Activated T-helper 1 cell treated with anti-CD3 and anti-CD28 coated beads, Interleukin-12 subunit alpha, Interleukin-12 subunit beta, Interleukin-2, Interleukin-4 antibody, amounts not matched to agents 30 ng/mL and 10 ng/mL and 1 ng/mL, durations not matched to agents 14 hours and 24 hours and 36 hours (primary cell): ENCODE measurements at regions of chr2 and their contacts with region 1.

Region 1: DNA sequence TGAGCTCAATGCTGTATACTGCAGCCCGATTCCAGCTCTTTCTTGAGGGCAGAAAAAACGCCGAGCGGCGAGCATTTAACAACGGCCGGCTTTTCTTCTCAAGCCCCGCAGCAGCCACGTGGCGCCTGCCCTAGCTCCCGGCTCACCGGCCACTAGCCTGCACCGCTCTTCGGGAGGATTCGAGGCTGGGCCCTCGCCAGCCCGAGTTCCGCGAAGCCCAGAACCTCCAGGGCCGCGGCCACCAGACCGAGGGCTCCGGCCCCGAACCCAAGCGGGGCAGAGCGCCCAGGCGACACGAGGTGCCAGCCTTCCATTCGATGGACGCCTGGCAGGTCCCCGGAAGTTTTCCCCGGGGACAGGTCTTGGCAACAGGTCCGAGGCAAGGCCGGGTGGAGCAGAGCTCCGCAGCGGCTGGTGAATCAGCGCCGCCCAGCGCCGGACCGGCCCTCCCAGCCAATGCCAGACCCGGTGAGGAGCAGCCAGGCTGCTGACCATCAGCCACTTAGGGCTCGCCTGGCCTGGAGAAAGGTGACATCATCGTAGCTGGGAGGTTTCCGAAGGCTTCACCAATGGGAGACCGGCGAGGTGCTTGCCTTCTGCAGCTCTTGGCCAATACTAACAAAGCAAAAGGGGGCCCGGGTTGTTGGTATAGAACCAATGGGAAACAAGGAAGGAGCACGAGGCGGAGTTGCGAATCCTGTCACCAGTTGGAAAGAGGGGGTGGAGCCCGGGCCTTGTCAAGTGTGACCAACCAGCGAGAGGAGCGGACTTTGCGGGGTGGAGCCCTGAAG is 544 bp upstream of the MXD1 start:
- DNase-seq: peak; percentile 100
- H3K4me3 Mint-ChIP-seq: peak overlapping the region; percentile 78
- H3K27ac Mint-ChIP-seq: peak overlapping the region; percentile 90
- H3K4me1 Mint-ChIP-seq: peaks cover 42% of the 10 kb centered on the region
- H3K27me3 Mint-ChIP-seq: no peaks in the 10 kb centered on the region

Region 2: GRCh38 chr2:69893684-69894551 is 20.4 kb before region 1 on chr2 and contains the start of gene SNRNP27:
- intact Hi-C with region 1: loop called (anchors 1 kb)
- DNase-seq: peak; percentile 71
- H3K4me3 Mint-ChIP-seq: peak within 1 kb of the TSS; percentile 99
- H3K27ac Mint-ChIP-seq: peak within 1 kb of the TSS; percentile 93
- H3K4me1 Mint-ChIP-seq: peaks cover 36% of the 10 kb centered on the region
- H3K27me3 Mint-ChIP-seq: no peaks in the 10 kb centered on the region
- total RNA-seq, gene SNRNP27: 54.0 and 55.6 TPM in 2 replicates

Region 3: DNA sequence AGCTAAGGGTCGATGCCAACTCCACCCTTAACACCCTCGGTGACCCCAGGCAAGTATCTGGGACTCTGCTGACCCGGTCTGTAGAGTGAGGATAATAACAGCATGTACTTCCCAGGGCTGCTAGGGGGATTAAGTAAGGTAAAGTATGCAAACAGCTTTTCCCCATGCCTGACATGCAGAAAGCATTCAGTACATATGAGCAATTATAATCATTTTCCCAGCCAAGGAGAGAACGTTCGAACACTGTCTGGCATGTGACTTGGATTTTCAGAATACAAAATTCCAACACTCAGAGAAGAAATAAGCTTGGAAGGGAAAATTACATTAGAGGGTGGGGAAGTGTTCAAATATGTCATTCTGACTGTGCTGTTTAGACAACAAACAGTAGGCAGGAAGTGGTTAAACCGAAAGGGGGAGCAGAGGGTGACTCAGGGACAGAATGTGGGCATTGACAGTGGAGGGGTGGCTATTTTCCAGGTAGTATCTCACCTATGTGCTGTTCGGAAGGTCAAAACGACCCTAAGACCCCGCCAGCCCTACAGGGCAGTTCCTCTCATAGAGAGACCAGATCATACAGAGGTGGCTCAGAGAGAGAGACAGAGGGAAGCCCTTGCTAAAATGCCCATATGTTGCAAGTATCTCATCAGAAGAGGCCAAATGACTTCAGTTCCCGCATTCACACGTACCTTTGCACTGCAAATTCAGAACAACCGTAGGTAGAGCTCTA is 32.1 kb after region 1 on chr2:
- intact Hi-C with region 1: loop called (anchors 1 kb)
- DNase-seq: peak; percentile 66
- H3K4me3 Mint-ChIP-seq: peak overlapping the region; percentile 67
- H3K27ac Mint-ChIP-seq: peak overlapping the region; percentile 86
- H3K4me1 Mint-ChIP-seq: peaks cover 52% of the 10 kb centered on the region
- H3K27me3 Mint-ChIP-seq: peaks cover 5% of the 10 kb centered on the region

Region 4: DNA sequence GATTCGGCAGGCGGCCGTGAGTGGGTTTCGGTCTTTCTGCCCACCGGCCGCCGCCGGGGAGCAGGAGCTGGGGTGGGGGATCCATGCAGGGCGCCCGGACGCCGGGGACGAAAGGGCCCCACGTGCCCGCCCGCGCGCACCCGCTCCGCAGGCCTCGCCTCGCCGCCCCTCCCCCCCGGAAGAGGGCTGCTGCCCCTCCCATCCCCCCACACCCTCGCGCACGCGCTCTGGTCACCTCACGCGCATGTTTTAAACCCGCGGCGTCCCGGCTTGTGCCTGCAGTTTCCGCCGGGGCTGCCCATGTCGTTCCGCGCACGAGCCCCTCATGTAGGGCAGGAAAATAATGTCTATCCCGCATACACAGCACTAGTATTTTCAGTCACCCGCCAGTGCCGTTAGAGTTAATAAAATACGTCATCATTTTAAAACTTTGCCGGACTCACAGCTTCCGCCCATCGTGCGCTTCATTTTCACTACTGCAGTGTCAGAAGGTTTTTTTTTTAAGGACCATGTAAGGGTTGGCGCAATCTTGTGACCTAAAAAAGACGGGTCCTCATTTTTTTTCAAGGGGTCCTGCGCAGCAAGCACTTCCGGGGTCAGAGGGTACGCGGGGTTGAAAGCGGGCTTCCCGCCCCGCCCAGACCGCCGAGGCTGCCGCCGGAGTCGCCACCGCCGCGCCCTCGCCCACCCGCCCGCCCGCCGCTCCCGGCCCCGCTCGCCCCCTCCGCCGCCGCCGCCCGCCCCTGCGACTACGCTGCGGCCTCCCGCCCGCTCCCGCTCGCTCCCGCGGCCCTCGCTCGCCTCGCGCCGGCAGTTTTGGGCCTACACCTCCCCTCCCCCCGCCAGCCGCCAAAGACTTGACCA is 172.7 kb after region 1 on chr2 and contains the start of gene PCBP1:
- intact Hi-C with region 1: loop called (anchors 1 kb)
- DNase-seq: peak; percentile 91
- H3K4me3 Mint-ChIP-seq: peak within 1 kb of the TSS; percentile 99
- H3K27ac Mint-ChIP-seq: peak within 1 kb of the TSS; percentile 100
- H3K4me1 Mint-ChIP-seq: peaks cover 56% of the 10 kb centered on the region
- H3K27me3 Mint-ChIP-seq: no peaks in the 10 kb centered on the region
- total RNA-seq, gene PCBP1: 426 and 427 TPM in 2 replicates

Region 5: DNA sequence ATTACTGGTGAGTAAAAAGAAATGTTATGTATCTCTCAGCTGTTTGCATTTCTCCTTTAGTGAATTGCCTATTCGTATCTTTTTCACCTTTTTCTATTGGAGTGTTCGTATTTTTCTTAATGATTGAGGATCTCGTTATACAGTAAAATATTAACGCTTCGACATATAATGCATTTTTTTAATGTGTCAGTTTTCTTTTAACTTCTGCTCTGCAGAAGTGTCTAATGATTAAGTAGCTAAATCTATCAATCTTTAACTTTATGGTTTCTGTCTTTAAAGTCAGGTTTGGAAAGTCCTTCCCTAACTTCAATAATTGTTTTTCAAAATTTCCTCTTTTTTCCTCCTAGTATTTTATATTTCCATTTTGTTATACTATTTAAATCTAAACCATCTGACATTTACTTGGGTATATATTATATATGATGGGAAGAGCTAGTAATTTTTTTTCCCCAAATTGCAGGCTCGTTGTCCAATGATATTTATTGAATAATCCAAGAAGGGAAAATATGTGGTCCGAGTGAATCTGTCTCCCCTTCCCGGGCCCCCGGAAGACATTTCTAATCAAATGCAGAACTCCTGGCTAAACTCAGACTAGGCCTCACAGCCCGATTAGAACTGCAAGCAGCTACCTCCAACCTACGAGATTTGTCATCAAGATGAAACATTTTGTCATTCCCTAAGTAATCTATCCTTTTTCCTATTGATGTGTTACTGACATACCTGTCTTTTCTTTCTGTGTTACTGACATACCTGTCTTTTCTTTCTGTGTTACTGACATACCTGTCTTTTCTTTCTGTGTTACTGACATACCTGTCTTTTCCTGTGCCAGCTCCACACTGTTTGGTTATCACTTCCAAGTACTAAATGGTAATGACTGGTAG is 190.1 kb after region 1 on chr2:
- intact Hi-C with region 1: no loop called
- DNase-seq: no peak
- H3K4me3 Mint-ChIP-seq: peak overlapping the region; percentile 79
- H3K27ac Mint-ChIP-seq: peak overlapping the region; percentile 87
- H3K4me1 Mint-ChIP-seq: peaks cover 42% of the 10 kb centered on the region
- H3K27me3 Mint-ChIP-seq: no peaks in the 10 kb centered on the region

Region 6: DNA sequence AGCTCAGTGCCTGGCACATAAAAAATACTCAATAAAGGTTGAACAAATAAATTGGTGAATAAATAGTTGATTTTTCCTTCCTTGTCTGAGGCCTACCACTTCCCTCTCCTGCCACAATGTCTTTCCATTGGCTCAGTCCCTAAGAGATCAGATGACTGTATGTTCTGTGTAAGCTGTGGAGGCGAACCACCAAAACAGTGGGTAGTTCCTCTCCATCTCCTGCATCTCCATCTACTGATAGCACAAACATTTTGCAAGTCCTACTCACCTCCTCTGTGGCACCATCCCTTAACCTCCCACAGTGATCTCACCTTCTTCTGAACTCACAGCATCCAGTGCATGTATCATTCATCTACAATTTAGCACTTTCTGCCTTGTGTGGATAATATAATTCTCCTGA is 223.2 kb after region 1 on chr2:
- intact Hi-C with region 1: loop called (anchors 1 kb)
- DNase-seq: no peak
- H3K4me3 Mint-ChIP-seq: peak overlapping the region; percentile 61
- H3K27ac Mint-ChIP-seq: peak overlapping the region; percentile 86
- H3K4me1 Mint-ChIP-seq: peaks cover 66% of the 10 kb centered on the region
- H3K27me3 Mint-ChIP-seq: no peaks in the 10 kb centered on the region